ENCODE measurements at regions of chr22 and their contacts with region 1.

Region 1: DNA sequence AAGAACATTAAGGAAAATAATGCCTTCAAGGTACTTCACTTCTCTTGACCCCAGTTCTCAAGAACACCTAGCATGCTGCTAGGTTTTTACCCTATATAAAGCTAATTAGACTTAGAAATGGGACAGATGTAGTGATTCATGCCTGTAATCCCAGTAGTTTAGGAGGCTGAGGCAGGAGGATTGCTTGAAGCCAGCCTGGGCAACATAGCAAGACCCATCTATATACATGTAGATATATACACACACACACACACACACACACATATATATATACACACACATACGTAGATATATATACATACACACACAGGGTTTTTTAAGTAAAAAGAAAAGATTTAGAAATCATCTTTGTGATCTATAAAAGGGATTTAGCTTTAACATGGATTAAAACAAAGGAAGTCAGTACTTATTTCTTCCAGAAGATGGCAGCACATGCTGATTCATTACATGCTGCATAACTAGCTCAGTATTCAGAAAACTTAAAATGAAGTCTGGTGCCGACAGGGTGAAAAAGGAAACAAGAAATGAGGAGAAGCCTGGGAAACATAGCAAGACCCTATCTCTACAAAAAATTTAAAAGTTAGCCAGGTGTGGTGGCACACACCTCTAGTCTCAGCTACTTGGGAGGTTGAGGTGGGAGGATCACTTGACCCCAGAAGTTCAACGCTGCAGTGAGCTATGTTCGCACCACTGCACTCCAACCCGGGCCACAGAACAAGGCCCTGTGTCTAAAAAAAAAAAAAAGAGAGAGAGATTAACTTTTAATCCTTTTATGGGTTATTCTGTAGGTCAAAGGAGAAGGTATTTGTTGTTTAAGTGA is 28.5 kb upstream of the RBX1 start:
- DNase-seq: no peak
- ATAC-seq: peak; percentile 63
- H3K4me3 ChIP-seq: no peak overlapping the region
- H3K27ac ChIP-seq: no peak overlapping the region
- H3K4me1 ChIP-seq: peaks cover 0 to 2% of the 10 kb centered on the region in 2 donors
- H3K27me3 ChIP-seq: no peaks in the 10 kb centered on the region

Region 2: GRCh38 chr22:40877488-40877887 is 45.2 kb before region 1 on chr22:
- intact Hi-C with region 1: no loop called
- DNase-seq: no peak
- ATAC-seq: no peak
- H3K4me3 ChIP-seq: no peak overlapping the region
- H3K27ac ChIP-seq: no peak overlapping the region
- H3K4me1 ChIP-seq: no peaks in the 10 kb centered on the region
- H3K27me3 ChIP-seq: no peaks in the 10 kb centered on the region

Region 3: GRCh38 chr22:41237707-41238569 is 315.2 kb after region 1 on chr22:
- intact Hi-C with region 1: loop called in 1 of 2 experiments (anchors 10 kb)
- DNase-seq: peak; percentile 84 to 86
- ATAC-seq: peak; percentile 57
- H3K4me3 ChIP-seq: peak overlapping the region; percentile 3 to 15
- H3K27ac ChIP-seq: no peak overlapping the region
- H3K4me1 ChIP-seq: no peaks in the 10 kb centered on the region
- H3K27me3 ChIP-seq: no peaks in the 10 kb centered on the region

Region 4: GRCh38 chr22:41448189-41448808 is 525.6 kb after region 1 on chr22:
- intact Hi-C with region 1: no loop called
- DNase-seq: peak; percentile 97
- ATAC-seq: peak; percentile 89
- H3K4me3 ChIP-seq: peak overlapping the region; percentile 19 to 96
- H3K27ac ChIP-seq: peak overlapping the region; percentile 90 to 93
- H3K4me1 ChIP-seq: no peaks in the 10 kb centered on the region
- H3K27me3 ChIP-seq: peaks cover 0 to 2% of the 10 kb centered on the region in 2 donors

Measured in aorta (tissue), 5 donors.